ENCODE measurements at regions of chr4 and their contacts with region 1.

Region 1: DNA sequence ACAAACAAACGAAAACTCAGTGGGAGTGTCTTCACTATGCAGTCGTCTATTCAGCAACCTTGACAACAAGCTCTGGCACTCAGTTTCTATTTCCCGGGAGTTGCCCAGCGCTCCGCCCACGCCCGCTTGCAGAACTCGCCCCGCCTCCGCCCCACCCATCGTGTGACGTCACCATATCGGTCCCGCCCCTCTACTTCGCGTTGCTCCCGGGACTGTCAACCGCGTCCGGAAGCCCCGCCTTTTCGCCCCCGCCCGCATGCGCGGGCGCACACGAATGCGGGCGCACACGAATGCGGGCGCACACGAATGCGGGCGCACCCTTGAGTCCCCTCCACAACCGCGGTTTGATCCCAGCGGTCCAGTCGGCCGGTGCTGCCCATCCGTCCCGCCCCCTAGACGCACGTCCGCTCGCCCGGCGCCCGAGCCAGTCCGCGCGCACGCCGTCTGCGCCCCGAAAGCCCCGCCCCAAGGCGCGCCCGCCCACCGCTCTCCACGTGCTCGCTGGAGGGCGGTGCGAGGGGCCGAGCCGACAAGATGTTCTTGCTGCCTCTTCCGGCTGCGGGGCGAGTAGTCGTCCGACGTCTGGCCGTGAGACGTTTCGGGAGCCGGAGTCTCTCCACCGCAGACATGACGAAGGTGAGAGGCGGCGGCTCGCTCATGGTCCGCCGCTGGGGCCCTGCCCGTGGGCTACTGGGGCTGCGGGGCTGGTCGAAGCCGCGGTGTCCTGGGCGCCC is at the start of gene LAP3:
- DNase-seq: peak; percentile 100
- H3K4me3 ChIP-seq: peak within 1 kb of the TSS; percentile 73 to 88 (median 78)
- H3K27ac ChIP-seq: peak within 1 kb of the TSS; percentile 89 to 97 (median 93)
- H3K4me1 ChIP-seq: peaks cover 25 to 41% (median 34%) of the 10 kb centered on the region in 4 donors
- H3K27me3 ChIP-seq: no peaks in the 10 kb centered on the region
- CTCF ChIP-seq: peak in 1 of 3 experiments; percentile 6
- EP300 ChIP-seq: no peak
- POLR2A ChIP-seq: peak; percentile 60
- total RNA-seq, gene LAP3: 72.3 to 117 (median 78.9) TPM

Region 2: DNA sequence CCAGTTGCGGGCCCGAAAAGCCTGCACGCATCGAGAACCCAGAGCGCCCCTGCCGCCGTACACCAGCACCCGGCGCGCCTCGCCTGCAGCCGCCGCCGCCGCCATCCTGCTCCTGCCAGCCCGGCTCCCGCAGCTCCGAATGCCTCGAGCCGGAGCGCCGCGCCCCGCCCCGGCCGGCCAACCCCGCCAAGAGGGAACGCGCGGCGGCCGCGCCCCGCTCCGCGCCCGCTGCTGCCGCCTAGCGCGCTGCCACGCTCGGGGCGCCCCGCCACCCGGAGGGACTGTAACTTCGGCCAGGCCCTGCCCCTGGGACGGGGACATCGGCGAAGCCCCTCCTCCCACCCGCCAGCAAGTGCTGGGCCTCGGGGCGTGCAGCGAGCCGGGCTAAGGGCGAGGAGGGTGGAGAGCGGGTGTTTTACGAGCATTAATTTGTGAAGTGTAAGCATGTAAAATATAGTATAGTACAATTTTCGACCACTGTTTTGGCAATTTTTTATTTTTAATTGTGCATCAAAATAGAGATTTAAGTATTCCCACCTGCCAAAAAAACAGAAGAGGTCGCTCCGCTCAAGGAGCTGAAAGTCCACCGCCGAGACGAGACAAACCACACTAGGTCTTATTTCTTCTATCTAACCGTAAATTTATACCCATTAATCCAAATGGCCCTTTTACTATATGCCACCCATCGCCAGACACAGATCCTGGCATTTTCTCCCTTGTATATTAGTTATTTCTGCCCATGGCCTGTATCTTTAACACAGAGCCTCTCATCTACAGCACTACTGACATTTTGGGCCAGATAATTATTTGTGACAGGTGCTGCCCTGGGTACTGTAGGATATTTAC is 64.9 kb before region 1 on chr4 and contains the start of gene QDPR:
- intact Hi-C with region 1: loop called (anchors 2 kb)
- DNase-seq: no peak
- H3K4me3 ChIP-seq: peak within 1 kb of the TSS; percentile 65 to 85 (median 80)
- H3K27ac ChIP-seq: peak within 1 kb of the TSS; percentile 75 to 86 (median 81)
- H3K4me1 ChIP-seq: peaks cover 16 to 34% (median 26%) of the 10 kb centered on the region in 4 donors
- H3K27me3 ChIP-seq: peaks cover 0 to 5% (median 0%) of the 10 kb centered on the region in 4 donors
- CTCF ChIP-seq: peak in 2 of 3 experiments; percentile 47 to 55
- EP300 ChIP-seq: no peak
- POLR2A ChIP-seq: no peak
- total RNA-seq, gene QDPR: 6.4 to 12.7 (median 9.7) TPM

Region 3: GRCh38 chr4:17614416-17615299 is 37.6 kb after region 1 on chr4 and contains the start of gene MED28:
- intact Hi-C with region 1: loop called (anchors 1 kb)
- DNase-seq: peak; percentile 99
- H3K4me3 ChIP-seq: peak within 1 kb of the TSS; percentile 79 to 97 (median 88)
- H3K27ac ChIP-seq: peak within 1 kb of the TSS; percentile 84 to 89 (median 86)
- H3K4me1 ChIP-seq: peaks cover 31 to 52% (median 47%) of the 10 kb centered on the region in 4 donors
- H3K27me3 ChIP-seq: no peaks in the 10 kb centered on the region
- CTCF ChIP-seq: peak in 1 of 3 experiments; percentile 27
- EP300 ChIP-seq: no peak
- POLR2A ChIP-seq: peak; percentile 91
- total RNA-seq, gene MED28: 11.8 to 22.8 (median 14.2) TPM

Region 4: GRCh38 chr4:17667653-17668201 is 90.6 kb after region 1 on chr4:
- intact Hi-C with region 1: no loop called
- DNase-seq: no peak
- H3K4me3 ChIP-seq: no peak overlapping the region
- H3K27ac ChIP-seq: no peak overlapping the region
- H3K4me1 ChIP-seq: no peaks in the 10 kb centered on the region
- H3K27me3 ChIP-seq: no peaks in the 10 kb centered on the region
- CTCF ChIP-seq: no peak
- EP300 ChIP-seq: no peak
- POLR2A ChIP-seq: no peak

Region 5: DNA sequence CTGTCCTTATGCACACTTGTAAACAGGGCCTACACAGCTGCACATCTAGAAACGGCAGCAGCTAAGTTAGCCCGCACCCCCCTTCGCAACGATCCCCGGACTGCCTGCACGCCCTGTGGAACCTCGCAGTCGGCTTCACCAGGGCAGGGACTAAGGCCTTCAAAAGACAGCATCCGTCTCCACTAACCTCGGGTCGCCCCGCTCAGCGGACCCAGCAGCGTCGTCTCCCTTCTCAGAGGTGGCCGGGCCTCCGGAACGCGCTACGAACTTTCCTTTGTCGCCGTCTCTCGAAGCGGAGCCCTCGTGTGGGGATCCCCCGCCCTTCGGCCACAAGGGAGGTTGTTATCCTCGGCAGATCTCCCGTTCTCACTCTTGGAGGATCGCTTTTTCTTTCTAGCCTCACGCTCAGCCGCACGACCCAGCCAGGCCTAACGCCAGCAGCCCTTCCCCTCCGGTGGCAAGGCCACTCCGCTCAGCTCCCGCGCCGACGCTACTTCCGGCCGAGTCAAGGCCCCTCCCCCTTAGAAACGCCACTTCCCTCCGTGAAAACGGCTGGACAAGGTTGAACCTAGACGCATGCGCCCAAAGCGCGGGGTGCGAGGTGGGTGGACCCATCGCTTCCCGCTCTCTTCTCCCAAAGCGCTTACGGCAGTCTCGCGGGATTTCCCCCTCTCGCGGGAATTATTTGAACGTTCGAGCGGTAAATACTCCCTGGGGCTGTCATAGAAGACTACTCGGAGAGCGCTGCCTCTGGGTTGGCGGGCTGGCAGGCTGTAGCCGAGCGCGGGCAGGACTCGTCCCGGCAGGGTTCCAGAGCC is 233.4 kb after region 1 on chr4 and contains the starts of genes DCAF16 and NCAPG:
- intact Hi-C with region 1: loop called (anchors 5 kb)
- DNase-seq: peak; percentile 100
- H3K4me3 ChIP-seq: peak within 1 kb of the TSS; percentile 72 to 91 (median 80)
- H3K27ac ChIP-seq: peak within 1 kb of the TSS; percentile 94 to 98 (median 97)
- H3K4me1 ChIP-seq: peaks cover 37 to 54% (median 48%) of the 10 kb centered on the region in 4 donors
- H3K27me3 ChIP-seq: no peaks in the 10 kb centered on the region
- CTCF ChIP-seq: no peak
- EP300 ChIP-seq: no peak
- POLR2A ChIP-seq: peak; percentile 92
- total RNA-seq, gene DCAF16: 23.4 to 28.7 (median 26.3) TPM
- total RNA-seq, gene NCAPG: 0.17 to 0.98 (median 0.71) TPM in 3 of 4 donors, not detected in the other

Region 6: DNA sequence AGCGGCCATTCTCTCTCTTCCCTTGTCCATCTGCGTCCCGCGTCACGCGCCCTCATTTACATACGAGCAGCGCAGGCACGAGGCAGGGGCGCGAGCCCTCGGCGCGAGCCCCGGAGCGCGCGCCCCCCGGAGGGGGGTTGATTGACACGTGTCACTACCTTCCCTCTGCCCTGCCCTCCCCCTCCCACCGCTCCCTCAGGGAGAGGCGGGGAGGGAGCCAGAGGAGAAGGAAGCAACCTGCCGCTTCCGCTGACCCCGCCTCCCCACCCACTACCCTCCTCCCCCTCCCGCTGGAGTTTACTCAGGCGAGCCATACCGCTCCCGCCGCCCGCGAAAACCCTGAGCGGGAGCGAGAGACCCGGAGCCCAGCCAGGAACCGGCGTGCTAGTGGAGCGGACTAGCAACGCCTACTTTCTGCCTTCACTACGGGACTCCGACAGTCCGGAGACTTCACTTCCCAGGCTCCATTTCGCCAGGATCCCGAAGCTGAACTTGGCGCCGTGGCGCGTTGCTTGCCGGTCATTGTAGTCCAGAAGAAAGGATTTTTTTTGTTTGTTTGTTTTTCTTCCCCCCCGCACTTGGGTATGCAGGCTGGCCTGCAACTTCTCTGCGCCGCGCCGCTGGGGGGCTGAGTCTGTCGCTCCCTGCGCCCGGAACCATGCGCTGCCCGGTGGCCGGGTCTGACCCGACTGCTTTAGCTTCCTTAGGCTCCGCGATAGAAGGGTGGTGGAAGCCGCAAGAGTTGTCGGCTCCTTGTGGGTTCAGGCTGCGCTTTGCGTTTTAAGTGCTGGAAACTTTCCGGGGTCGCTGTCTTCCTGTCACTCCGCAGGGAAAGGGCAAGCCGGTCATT is 444.8 kb after region 1 on chr4 and contains the start of gene LCORL:
- intact Hi-C with region 1: loop called (anchors 5 kb)
- DNase-seq: peak; percentile 98
- H3K4me3 ChIP-seq: peak within 1 kb of the TSS; percentile 86 to 89 (median 88)
- H3K27ac ChIP-seq: peak within 1 kb of the TSS; percentile 93 to 98 (median 95)
- H3K4me1 ChIP-seq: peaks cover 10 to 23% (median 18%) of the 10 kb centered on the region in 4 donors
- H3K27me3 ChIP-seq: no peaks in the 10 kb centered on the region
- CTCF ChIP-seq: no peak
- EP300 ChIP-seq: no peak
- POLR2A ChIP-seq: no peak
- total RNA-seq, gene LCORL: 7.6 to 14.1 (median 11.5) TPM